ENCODE measurements at regions of chr1 and their contacts with region 1.

Region 1: GRCh38 chr1:1890506-1891348 is at the start of gene GNB1:
- DNase-seq: peak; percentile 95
- ATAC-seq: peak; percentile 87
- total RNA-seq, gene GNB1: 172 TPM

Region 2: GRCh38 chr1:1081311-1082238 is 809.2 kb before region 1 on chr1:
- intact Hi-C with region 1: no loop called
- DNase-seq: peak; percentile 27
- ATAC-seq: no peak

Region 3: GRCh38 chr1:1777950-1778662 is 112.6 kb before region 1 on chr1 and contains the start of gene NADK:
- intact Hi-C with region 1: loop called (anchors 10 kb)
- DNase-seq: peak; percentile 87
- ATAC-seq: peak; percentile 68
- total RNA-seq, gene NADK: 24.4 TPM

Region 4: DNA sequence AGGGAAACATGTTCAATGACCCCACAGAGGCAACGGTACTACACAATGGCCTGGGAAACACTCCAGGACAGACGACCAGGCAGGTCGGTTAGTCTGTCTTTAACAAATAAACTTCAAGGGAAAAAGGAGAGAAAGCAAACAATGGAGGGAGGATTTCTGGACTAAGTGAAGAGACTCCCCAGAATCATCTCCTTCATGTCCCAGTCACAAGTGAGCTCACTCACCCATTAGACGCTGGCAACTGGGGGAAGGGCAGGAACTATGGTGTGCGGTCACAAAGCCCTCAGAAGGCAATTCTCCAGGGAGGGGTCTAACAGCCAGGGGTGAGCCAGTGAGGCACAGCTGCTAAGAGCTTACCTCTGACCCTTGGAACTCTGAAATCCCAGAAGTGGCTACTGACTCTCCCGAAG is 56.8 kb before region 1 on chr1:
- intact Hi-C with region 1: loop called (anchors 10 kb)
- DNase-seq: no peak
- ATAC-seq: peak; percentile 39

Region 5: DNA sequence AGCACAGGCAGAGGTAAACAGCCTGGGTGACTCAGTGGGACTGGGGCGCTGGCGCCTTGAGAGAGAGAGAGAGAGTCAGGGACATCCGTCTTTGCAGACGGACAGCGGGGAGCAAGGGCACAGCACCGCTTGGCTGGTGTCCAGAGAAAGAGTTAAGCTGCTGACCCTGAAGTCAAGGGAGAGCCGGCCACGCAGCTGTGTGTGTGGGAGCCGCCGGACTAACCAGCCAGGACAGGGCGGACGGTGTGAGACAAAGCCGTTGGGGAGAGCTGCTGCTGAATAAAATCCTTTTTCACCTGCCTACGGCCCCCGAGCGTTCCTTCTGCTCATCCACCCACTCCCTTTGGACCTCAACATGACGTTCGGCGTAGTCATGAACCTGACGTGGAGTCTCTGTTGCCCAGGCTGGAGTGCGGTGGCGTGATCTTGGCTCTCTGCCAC is 98.4 kb after region 1 on chr1:
- intact Hi-C with region 1: no loop called
- DNase-seq: peak; percentile 60
- ATAC-seq: peak; percentile 74